ENCODE measurements at regions of chr2 and their contacts with region 1.

Region 1: GRCh38 chr2:206993996-206994463 is 54.7 kb downstream of the CPO start:
- H3K4me3 Mint-ChIP-seq: no peak overlapping the region
- H3K27ac Mint-ChIP-seq: no peak overlapping the region
- H3K4me1 Mint-ChIP-seq: peaks cover 10% of the 10 kb centered on the region
- H3K27me3 Mint-ChIP-seq: no peaks in the 10 kb centered on the region

Region 2: DNA sequence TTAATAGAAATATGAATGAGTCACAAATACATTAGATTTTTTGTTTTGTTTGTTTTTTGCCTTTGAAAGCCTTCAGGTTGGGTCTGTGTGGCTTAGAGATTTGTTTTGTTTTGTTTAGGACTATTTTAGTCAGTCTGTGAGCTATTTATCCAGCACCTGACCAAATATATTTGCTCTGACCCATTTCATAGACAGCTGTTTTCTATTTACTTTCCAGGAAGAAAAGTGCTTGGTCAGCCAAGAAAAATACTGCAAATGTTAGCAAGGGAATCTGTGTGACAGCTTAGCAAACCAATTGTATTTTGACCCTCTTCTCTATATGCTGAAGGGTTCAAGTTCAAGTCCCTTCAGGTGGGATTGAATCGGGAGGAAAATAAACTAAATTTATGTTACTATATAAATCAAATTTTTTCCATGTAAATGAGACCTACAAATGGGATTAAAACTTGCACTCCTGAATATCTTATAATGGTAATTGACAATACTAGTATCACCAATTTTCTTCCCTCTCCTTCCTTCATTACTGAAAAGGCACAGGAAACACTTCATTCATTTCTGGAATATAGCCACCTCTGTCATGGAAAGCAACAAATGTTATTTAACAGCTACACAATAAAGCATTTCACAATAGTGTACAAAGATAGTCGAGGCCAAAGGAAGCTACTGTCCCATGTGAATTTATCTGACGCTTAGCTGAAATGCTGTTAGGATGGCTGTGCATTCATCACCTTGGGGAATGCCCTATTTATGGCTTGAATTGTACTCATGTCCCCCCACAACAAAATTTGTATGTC is 194.8 kb after region 1 on chr2:
- intact Hi-C with region 1: loop called (anchors 10 kb)
- H3K4me3 Mint-ChIP-seq: no peak overlapping the region
- H3K27ac Mint-ChIP-seq: no peak overlapping the region
- H3K4me1 Mint-ChIP-seq: no peaks in the 10 kb centered on the region
- H3K27me3 Mint-ChIP-seq: peaks cover 2% of the 10 kb centered on the region